ENCODE measurements at regions of chr6 and their contacts with region 1.

Region 1: DNA sequence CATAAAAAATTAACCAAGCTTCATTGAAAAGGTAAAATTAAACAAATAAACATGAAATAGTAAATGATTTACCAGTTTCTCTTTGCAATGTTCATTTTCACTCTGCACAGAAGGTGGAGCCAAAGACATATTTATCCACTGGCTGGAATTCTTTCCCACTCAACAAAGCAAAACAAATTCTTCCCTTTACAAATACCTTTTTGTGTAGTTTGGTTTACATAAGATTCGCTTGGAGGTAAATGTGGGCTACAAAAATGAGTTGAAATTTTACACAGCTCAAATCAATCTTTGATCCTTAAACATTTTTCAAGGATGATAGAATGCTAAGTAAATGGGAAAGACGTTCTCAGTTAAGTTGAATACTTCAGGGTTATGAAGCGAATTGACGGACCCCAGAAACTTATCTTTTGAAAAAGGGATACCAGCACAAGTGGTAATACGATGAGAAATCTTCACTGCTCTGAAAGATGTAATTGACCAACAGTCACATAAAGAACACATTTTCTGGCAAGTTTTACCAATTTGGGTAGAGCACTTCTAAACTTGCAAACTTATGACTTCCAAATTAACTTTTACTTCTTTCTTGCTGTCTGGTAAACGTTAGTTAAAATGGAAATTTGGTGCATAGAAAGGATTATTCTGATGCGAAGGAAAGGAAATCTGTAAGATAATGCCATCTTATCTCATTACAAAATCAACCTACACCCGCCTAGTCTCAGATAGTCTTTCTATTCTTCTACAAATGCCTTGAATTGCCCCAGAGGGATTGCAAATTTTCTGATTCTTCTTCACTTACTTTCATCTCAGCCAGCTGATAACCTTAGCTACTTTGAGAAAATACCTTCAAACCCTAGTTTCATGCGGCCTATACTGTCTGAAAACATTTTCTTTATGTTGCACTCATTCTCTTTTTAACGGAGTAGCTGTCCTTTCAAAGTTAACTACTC is 4.7 kb upstream of the GJA1 start:
- DNase-seq: no peak
- ATAC-seq: peak in 1 of 4 donors; percentile 37
- H3K4me3 ChIP-seq: peak overlapping the region in 1 of 12 donors; percentile 4
- H3K27ac ChIP-seq: peak overlapping the region in 3 of 12 donors; percentile 23 to 44 (median 24)
- H3K4me1 ChIP-seq: peaks cover 0 to 13% (median 1%) of the 10 kb centered on the region in 12 donors
- H3K27me3 ChIP-seq: no peaks in the 10 kb centered on the region
- CTCF ChIP-seq: peak; percentile 48 to 85 (median 78)
- POLR2A ChIP-seq: no peak

Region 2: GRCh38 chr6:121334299-121335086 is 96.3 kb before region 1 on chr6 and contains the start of gene TBC1D32:
- intact Hi-C with region 1: loop called in 1 of 10 experiments (anchors 2 kb)
- DNase-seq: peak; percentile 91 to 96 (median 94)
- ATAC-seq: peak; percentile 99 to 100 (median 100)
- H3K4me3 ChIP-seq: peak within 1 kb of the TSS; percentile 12 to 87 (median 68)
- H3K27ac ChIP-seq: peak within 1 kb of the TSS; percentile 70 to 98 (median 92)
- H3K4me1 ChIP-seq: peaks cover 0 to 12% (median 2%) of the 10 kb centered on the region in 12 donors
- H3K27me3 ChIP-seq: no peaks in the 10 kb centered on the region
- CTCF ChIP-seq: peak in 1 of 12 donors; percentile 12
- POLR2A ChIP-seq: peak in 1 of 2 donors; percentile 52
- total RNA-seq, gene TBC1D32: 1.0 to 4.6 (median 3.4) TPM

Region 3: GRCh38 chr6:121666814-121667213 is 236.0 kb after region 1 on chr6:
- intact Hi-C with region 1: loop called in 3 of 10 experiments (anchors 5 to 10 kb)
- DNase-seq: no peak
- ATAC-seq: peak; percentile 93 to 96 (median 95)
- H3K4me3 ChIP-seq: no peak overlapping the region
- H3K27ac ChIP-seq: peak overlapping the region in 11 of 12 donors; percentile 18 to 74 (median 47)
- H3K4me1 ChIP-seq: peaks cover 0 to 17% (median 12%) of the 10 kb centered on the region in 12 donors
- H3K27me3 ChIP-seq: no peaks in the 10 kb centered on the region
- CTCF ChIP-seq: no peak
- POLR2A ChIP-seq: no peak

Region 4: GRCh38 chr6:122184401-122184827 is 753.6 kb after region 1 on chr6:
- intact Hi-C with region 1: loop called (anchors 2 to 5 kb)
- DNase-seq: no peak
- ATAC-seq: peak; percentile 51 to 83 (median 74)
- H3K4me3 ChIP-seq: peak overlapping the region in 7 of 12 donors; percentile 22 to 43 (median 34)
- H3K27ac ChIP-seq: no peak overlapping the region
- H3K4me1 ChIP-seq: peaks cover 0 to 10% (median 0%) of the 10 kb centered on the region in 12 donors
- H3K27me3 ChIP-seq: no peaks in the 10 kb centered on the region
- CTCF ChIP-seq: peak; percentile 16 to 61 (median 49)
- POLR2A ChIP-seq: no peak

Region 5: GRCh38 chr6:122372647-122373046 is 941.9 kb after region 1 on chr6:
- intact Hi-C with region 1: loop called in 1 of 10 experiments (anchors 10 kb)
- DNase-seq: no peak
- ATAC-seq: no peak
- H3K4me3 ChIP-seq: no peak overlapping the region
- H3K27ac ChIP-seq: no peak overlapping the region
- H3K4me1 ChIP-seq: no peaks in the 10 kb centered on the region
- H3K27me3 ChIP-seq: no peaks in the 10 kb centered on the region
- CTCF ChIP-seq: peak in 8 of 12 donors; percentile 10 to 42 (median 26)
- POLR2A ChIP-seq: no peak

Measured in heart left ventricle (tissue), 16 donors.